ENCODE measurements at regions of chr2 and their contacts with region 1.

Region 1: DNA sequence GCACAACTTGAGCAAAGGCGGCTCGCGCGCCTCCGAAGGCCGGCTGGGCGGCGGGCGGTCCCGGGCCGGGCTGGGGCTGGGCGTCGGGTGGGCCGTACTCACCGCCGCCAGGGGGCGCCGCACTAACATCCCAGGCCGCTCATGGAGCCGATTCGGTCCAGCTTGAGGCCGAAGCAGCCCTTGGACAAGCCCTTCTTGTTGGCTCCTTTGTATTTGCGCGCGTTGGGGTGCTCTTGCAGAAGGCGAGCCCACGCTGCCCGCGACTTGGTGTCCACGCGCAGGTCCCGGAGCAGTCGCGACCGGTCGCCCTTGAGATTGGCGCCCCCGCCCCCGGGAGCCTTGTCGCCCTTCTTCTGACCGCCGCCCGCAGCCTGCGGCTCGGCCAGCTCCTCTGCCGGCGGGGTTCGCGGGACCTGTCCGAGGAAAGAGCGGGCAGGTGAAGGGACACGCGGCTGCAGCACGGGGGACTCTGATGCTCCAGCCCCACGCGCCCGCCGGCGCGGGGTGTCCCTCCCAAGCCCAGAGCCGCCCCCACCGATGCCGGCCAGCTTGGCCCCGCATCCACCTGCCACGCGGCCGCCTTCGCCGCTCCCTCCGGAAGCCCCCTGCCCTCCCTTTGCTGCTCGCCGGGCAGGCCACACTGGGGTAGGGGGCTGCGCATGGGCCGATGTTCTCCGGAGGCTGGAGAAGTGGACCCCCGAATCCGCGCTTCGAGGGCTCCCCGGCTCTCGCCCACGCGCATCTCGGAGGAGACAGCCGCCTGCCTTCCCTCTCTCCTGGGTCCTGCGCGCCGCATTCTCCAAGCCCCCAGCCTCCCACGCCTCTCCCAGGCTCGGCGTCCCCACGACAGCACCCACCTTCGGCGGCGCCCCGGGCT is 655 bp downstream of the NPPC start:
- H3K4me3 ChIP-seq: peak overlapping the region; percentile 61
- H3K27ac ChIP-seq: peak overlapping the region; percentile 57; the same call in 1 of the 2 replicates
- H3K4me1 ChIP-seq: no peaks in the 10 kb centered on the region
- CTCF ChIP-seq: peak; percentile 90

Region 2: GRCh38 chr2:231908584-231908983 is 17.0 kb before region 1 on chr2:
- CTCF ChIA-PET with region 1: interaction called, 14 read pairs
- POLR2A ChIA-PET with region 1: no interaction called
- H3K4me3 ChIP-seq: no peak overlapping the region
- H3K27ac ChIP-seq: no peak overlapping the region
- H3K4me1 ChIP-seq: no peaks in the 10 kb centered on the region
- CTCF ChIP-seq: no peak

Region 3: GRCh38 chr2:232142049-232142448 is 216.5 kb after region 1 on chr2:
- CTCF ChIA-PET with region 1: interaction called, 85 read pairs
- POLR2A ChIA-PET with region 1: interaction called, 4 read pairs
- H3K4me3 ChIP-seq: no peak overlapping the region
- H3K27ac ChIP-seq: no peak overlapping the region
- H3K4me1 ChIP-seq: no peaks in the 10 kb centered on the region
- CTCF ChIP-seq: peak; percentile 54; the same call in 1 of the 2 replicates

Region 4: GRCh38 chr2:232327105-232328041 is 401.8 kb after region 1 on chr2:
- CTCF ChIA-PET with region 1: interaction called, 14 read pairs
- POLR2A ChIA-PET with region 1: no interaction called
- H3K4me3 ChIP-seq: no peak overlapping the region
- H3K27ac ChIP-seq: no peak overlapping the region
- H3K4me1 ChIP-seq: no peaks in the 10 kb centered on the region
- CTCF ChIP-seq: peak; percentile 54; the same call in 1 of the 2 replicates